ENCODE measurements at regions of chr10 and their contacts with region 1.

Region 1: DNA sequence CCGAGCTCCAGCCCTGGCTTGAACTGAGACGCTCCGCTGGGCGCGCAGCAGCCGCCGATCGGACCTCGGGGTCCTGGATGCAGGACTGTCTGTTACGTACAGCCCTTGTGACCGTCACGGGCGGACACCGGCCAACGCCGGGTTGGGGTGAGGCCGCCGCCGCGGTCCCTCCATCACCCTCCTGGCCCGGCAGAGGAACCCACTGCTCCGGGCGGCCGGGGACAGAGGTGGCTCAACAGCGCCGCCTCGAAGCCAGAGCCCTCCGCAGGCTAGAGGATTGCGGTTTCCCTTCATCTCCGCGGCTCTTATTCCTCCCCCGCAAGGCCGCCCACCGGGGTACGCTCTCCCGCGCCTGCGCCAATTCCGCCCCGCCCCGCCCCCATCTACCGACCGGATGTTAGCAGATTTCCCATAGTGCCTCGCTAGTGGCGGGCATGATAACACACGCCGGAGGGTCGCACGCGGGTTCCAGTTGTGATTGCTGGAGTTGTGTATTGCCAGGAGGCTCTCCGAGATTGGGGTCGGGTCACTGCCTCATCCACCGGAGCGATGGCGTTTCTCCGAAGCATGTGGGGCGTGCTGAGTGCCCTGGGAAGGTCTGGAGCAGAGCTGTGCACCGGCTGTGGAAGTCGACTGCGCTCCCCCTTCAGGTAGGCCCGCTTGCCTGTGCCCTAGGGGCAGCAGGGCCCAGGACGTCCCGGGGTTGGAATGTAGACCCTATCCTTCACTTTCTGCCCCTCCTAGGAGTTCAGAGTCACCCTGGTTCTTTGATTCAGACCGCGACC is at the start of gene TFAM:
- DNase-seq: peak; percentile 99
- H3K4me3 ChIP-seq: peak within 1 kb of the TSS; percentile 77 to 86 (median 78)
- H3K27ac ChIP-seq: peak within 1 kb of the TSS; percentile 88 to 92 (median 90)
- H3K4me1 ChIP-seq: peaks cover 10 to 31% (median 24%) of the 10 kb centered on the region in 4 donors
- H3K27me3 ChIP-seq: no peaks in the 10 kb centered on the region
- CTCF ChIP-seq: peak; percentile 28 to 46 (median 43)
- EP300 ChIP-seq: no peak
- POLR2A ChIP-seq: peak; percentile 60
- total RNA-seq, gene TFAM: 15.4 to 24.3 (median 19.5) TPM

Region 2: DNA sequence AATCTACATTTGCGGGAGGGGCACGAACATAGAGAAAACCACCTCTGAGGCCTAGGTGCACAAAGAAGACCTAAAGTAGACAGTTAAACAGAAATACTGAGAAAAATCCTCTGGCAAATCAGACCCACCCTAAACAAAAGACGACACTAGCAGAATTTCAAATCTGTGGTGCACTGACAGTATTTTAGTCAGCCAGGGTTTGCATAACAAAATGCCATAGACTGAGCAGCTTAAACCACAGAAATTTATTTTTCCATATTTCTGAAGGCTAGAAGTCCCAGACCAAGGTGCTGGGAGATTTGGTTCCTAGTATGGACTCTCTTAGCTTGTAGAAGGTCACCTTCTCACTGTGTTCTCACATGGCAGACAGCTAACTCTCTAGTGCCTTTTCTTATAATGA is 143.8 kb before region 1 on chr10:
- intact Hi-C with region 1: no loop called
- DNase-seq: no peak
- H3K4me3 ChIP-seq: no peak overlapping the region
- H3K27ac ChIP-seq: no peak overlapping the region
- H3K4me1 ChIP-seq: no peaks in the 10 kb centered on the region
- H3K27me3 ChIP-seq: no peaks in the 10 kb centered on the region
- CTCF ChIP-seq: no peak
- EP300 ChIP-seq: no peak
- POLR2A ChIP-seq: no peak

Region 3: GRCh38 chr10:58299580-58299979 is 85.6 kb before region 1 on chr10:
- intact Hi-C with region 1: loop called (anchors 2 kb)
- DNase-seq: no peak
- H3K4me3 ChIP-seq: no peak overlapping the region
- H3K27ac ChIP-seq: no peak overlapping the region
- H3K4me1 ChIP-seq: peaks cover 0 to 3% (median 0%) of the 10 kb centered on the region in 4 donors
- H3K27me3 ChIP-seq: peaks cover 0 to 12% (median 0%) of the 10 kb centered on the region in 4 donors
- CTCF ChIP-seq: peak; percentile 71 to 82 (median 72)
- EP300 ChIP-seq: no peak
- POLR2A ChIP-seq: no peak

Region 4: GRCh38 chr10:58322072-58322834 is 62.9 kb before region 1 on chr10:
- intact Hi-C with region 1: no loop called
- DNase-seq: no peak
- H3K4me3 ChIP-seq: no peak overlapping the region
- H3K27ac ChIP-seq: no peak overlapping the region
- H3K4me1 ChIP-seq: peaks cover 0 to 6% (median 0%) of the 10 kb centered on the region in 4 donors
- H3K27me3 ChIP-seq: peaks cover 0 to 12% (median 0%) of the 10 kb centered on the region in 4 donors
- CTCF ChIP-seq: no peak
- EP300 ChIP-seq: no peak
- POLR2A ChIP-seq: no peak

Region 5: GRCh38 chr10:58334817-58335305 is 50.3 kb before region 1 on chr10 and contains the start of gene UBE2D1:
- intact Hi-C with region 1: loop called (anchors 5 kb)
- DNase-seq: peak; percentile 97
- H3K4me3 ChIP-seq: peak within 1 kb of the TSS; percentile 87 to 99 (median 94)
- H3K27ac ChIP-seq: peak within 1 kb of the TSS; percentile 84 to 91 (median 87)
- H3K4me1 ChIP-seq: peaks cover 7 to 22% (median 20%) of the 10 kb centered on the region in 4 donors
- H3K27me3 ChIP-seq: no peaks in the 10 kb centered on the region
- CTCF ChIP-seq: peak in 2 of 3 experiments; percentile 16 to 46
- EP300 ChIP-seq: no peak
- POLR2A ChIP-seq: peak; percentile 87
- total RNA-seq, gene UBE2D1: 11.5 to 17.4 (median 15.3) TPM

Region 6: DNA sequence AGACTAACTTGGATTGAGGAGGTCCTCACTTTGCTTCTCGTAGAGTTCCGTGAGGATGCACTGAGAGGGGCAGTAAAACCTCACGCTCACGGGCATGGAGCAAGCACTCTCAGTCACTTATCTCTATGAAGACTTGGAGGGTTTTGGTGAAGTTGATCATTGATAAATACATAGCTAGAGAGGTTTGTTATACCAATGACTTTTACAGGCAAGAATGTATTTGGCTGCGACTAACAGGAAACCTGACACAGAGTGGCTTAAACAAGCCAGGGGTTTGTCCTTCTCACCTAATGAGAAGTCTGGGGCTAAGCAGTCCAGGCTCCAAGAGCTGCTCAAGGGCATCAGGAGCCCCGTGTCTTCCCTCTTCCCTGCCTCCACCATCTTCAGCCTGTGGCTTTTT is 133.6 kb after region 1 on chr10:
- intact Hi-C with region 1: no loop called
- DNase-seq: no peak
- H3K4me3 ChIP-seq: no peak overlapping the region
- H3K27ac ChIP-seq: no peak overlapping the region
- H3K4me1 ChIP-seq: peaks cover 0 to 54% (median 36%) of the 10 kb centered on the region in 4 donors
- H3K27me3 ChIP-seq: no peaks in the 10 kb centered on the region
- CTCF ChIP-seq: no peak
- EP300 ChIP-seq: no peak
- POLR2A ChIP-seq: no peak

Region 7: DNA sequence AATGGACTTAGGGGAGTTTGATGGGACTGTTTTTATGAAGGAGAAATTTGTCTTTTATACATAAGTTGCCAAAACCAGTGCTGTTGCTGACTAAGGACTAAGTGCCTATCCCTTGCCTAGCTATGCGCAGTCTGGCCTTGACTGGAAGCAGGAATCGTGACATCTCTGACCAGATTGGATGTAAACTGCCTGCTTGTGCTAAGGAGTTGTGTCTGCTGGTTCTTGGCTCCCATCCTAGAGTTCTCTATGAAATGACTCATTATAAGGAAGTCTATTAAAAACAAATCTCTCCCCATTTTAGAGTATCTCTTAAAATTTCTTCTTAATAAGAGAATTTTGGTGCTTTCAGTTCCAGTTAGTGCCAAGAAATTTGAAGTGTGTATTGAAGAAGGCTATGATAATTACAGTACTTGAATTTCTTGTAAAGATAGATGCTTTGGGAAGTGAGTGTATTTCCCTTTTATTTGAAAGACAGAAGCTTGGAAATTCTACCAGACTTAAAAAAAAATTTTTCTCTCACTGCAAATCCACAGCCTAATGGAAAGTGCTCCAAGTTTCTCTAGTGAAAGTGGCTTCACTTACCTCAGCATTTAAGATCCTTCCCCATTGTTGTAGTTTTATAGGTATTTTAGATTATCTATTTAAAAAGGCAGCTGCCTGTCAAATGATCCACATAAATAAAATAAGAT is 205.1 kb after region 1 on chr10:
- intact Hi-C with region 1: no loop called
- DNase-seq: no peak
- H3K4me3 ChIP-seq: no peak overlapping the region
- H3K27ac ChIP-seq: peak overlapping the region in 3 of 4 donors; percentile 9 to 32 (median 14)
- H3K4me1 ChIP-seq: peaks cover 6 to 20% (median 18%) of the 10 kb centered on the region in 4 donors
- H3K27me3 ChIP-seq: no peaks in the 10 kb centered on the region
- CTCF ChIP-seq: no peak
- EP300 ChIP-seq: no peak
- POLR2A ChIP-seq: no peak

Measured in esophagus muscularis mucosa (tissue), 4 donors.